Posterior vena cava (tissue), 2 donors: ENCODE measurements at regions of chr20 and their contacts with region 1.

Region 1: DNA sequence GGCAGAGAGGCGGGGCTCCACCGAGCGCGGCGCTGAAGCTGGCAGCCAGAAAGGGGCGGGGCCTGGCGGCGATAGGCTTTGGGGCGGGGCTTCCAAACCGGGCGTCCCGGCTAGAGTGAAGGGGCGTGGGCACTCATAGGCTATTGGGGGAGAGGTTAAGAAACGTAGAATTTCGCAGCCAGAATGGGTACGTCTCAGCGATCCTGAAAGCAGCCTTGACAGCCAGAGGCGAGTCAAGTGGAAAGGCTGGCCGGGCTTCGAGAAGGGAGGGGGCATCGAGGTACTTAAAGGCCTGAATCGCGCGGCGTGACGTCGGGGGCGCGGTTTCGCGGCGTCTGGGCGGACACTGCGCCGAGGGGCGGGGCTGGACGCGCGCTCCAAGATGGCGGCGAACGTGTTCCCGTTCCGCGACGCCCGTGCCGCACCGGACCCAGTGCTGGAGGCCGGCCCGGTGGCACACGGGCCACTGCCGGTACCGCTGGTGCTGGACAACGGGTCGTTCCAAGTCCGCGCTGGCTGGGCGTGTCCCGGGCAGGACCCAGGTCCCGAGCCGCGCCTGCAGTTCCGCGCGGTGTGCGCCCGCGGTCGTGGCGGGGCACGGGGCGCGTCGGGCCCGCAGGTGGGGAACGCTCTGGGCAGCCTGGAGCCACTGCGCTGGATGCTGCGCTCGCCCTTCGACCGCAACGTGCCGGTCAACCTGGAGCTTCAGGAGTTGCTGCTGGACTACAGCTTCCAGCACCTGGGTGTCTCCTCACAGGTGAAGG is at the start of gene ACTR5:
- DNase-seq: peak; percentile 98
- total RNA-seq, gene ACTR5: 5.1 to 5.8 TPM

Region 2: GRCh38 chr20:38270869-38271605 is 477.2 kb before region 1 on chr20:
- intact Hi-C with region 1: loop called in 1 of 2 experiments (anchors 5 kb)
- DNase-seq: peak; percentile 83

Region 3: DNA sequence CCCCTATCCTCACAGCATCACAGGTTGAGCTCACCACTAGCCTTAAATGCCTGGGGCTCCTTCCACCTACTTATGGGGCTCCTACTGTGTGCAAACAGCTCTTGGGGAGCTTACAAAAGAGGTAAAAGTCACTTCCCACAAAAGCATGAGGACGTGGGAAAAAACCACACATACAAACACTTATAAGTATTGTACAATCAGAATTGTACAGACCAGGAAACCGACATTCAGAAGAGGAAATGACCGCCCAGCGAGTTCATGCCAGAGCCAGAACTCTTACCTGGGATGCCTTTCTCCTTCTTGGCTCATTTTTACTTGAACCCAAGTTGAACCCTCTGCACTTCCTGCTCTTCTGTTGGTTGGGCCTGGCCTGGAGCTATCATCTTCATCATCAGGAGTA is 50.9 kb after region 1 on chr20:
- intact Hi-C with region 1: no loop called
- DNase-seq: no peak